HCT116 (cell line): ENCODE measurements at regions of chr19 and their contacts with region 1.

Region 1: DNA sequence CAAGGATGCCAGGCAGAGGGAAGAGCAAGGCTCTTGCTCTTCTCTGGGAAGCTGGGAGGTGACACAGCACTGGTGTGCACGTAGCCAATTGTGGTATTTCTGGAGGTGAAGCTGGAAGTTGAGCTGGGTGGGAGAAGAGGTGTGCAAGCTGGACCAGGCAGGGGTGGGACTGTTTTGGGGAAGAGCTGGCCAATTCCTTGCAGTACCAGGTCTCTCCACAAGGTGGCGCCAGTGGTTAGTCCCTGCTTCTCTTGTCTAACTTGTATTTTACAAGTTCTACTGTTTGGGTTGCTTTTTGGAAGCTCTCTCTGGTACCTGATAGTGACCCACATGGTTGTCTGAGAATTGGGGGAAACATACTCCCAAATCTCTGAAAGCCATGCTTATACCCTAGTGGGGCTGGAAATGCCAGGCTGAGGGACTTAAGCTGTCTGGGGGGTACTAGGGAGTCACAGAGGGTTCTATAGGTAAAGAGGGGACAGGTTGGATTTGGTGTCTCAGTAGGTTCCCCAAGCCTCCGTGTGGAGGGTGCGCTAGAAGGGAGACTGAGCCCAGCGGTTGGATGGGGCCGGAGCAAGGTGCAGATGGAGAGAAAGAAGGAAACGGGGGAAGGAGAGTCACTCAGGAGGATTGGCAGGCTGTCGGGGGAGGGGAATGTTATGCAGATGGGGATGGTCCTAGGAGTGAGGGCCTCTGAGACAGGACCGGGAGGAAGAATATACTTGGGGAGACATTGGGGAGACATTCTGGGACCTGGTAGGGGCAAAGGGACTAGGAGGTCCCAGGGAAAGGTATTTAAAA is 3.0 kb downstream of the HPN start:
- DNase-seq: no peak
- ATAC-seq: peak; percentile 47
- H3K4me3 ChIP-seq: no peak overlapping the region
- H3K27ac ChIP-seq: no peak overlapping the region
- H3K4me1 ChIP-seq: no peaks in the 10 kb centered on the region
- H3K27me3 ChIP-seq: no peaks in the 10 kb centered on the region
- CTCF ChIP-seq: peak; percentile 65 to 98 (median 94)
- POLR2A ChIP-seq: no peak
- RAD21 ChIP-seq: peak; percentile 71

Region 2: DNA sequence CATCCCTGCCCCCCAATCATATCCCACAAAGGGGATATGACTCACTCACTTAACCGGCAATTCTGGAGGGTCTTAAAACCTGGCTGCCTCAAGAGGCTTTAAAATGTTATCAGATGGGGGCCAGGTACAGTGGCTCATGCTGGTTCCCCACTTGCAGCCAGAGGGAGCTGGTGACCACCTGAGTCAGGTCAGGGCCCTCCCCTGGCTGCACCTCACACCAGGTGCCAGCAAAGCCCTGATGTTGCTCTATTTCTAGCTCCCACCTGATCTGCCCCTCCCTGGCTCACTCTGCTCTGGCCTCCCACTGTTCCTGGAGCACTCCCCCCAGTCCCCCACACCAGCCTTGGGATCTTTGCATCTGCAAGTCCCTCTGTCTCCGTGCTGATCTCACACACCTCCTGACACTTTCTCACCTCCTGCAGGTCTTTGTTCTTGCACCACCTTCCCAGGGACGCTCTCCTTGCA is 11.2 kb after region 1 on chr19:
- CTCF ChIA-PET with region 1: interaction called, 25 read pairs
- POLR2A ChIA-PET with region 1: no interaction called
- RAD21 ChIA-PET with region 1: no interaction called
- intact Hi-C with region 1: no loop called
- DNase-seq: no peak
- ATAC-seq: peak; percentile 99
- H3K4me3 ChIP-seq: no peak overlapping the region
- H3K27ac ChIP-seq: no peak overlapping the region
- H3K4me1 ChIP-seq: peaks cover 0 to 8% of the 10 kb centered on the region in 2 experiments; a peak in 2 of 4 replicates
- H3K27me3 ChIP-seq: no peaks in the 10 kb centered on the region
- CTCF ChIP-seq: peak; percentile 69 to 88 (median 71)
- POLR2A ChIP-seq: no peak
- RAD21 ChIP-seq: peak; percentile 70